GM12878 (cell line): ENCODE measurements at regions of chr14 and their contacts with region 1.

Region 1: DNA sequence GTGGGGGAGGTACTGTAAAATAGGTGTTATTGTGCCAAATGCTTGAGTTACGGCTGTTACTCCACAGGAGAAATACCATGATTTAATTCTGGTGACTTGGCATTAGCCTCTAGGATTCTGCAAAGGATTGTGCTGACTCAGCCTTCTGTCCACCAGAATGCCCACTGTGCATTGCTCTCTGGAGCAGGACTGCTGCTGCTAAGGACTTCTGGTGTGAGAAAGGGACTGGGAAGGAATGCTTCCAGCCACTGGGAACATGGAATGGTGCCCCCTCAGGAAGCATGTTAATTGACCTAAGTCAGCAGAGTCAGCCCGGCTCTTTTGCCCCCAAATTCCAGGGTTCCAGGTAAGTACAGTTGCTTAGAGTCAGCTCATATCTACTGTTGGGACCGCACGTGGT is 32.9 kb downstream of the ZFHX2 start:
- DNase-seq: no peak
- ATAC-seq: no peak
- H3K4me3 ChIP-seq: no peak overlapping the region
- H3K27ac ChIP-seq: no peak overlapping the region
- H3K4me1 ChIP-seq: no peaks in the 10 kb centered on the region
- H3K27me3 ChIP-seq: no peaks in the 10 kb centered on the region
- CTCF ChIP-seq: no peak
- EP300 ChIP-seq: no peak
- POLR2A ChIP-seq: no peak
- RAD21 ChIP-seq: no peak

Region 2: GRCh38 chr14:22766456-22767322 is 752.0 kb before region 1 on chr14 and contains the start of gene OXA1L:
- CTCF ChIA-PET with region 1: no interaction called
- POLR2A ChIA-PET with region 1: no interaction called
- RAD21 ChIA-PET with region 1: no interaction called
- SMC1A ChIA-PET with region 1: no interaction called
- in situ Hi-C with region 1: no loop called
- intact Hi-C with region 1: no loop called
- DNase-seq: peak; percentile 92
- ATAC-seq: peak; percentile 89
- H3K4me3 ChIP-seq: peak within 1 kb of the TSS; percentile 91
- H3K27ac ChIP-seq: peak within 1 kb of the TSS; percentile 98
- H3K4me1 ChIP-seq: no peaks in the 10 kb centered on the region; the same call in 1 of the 2 replicates
- H3K27me3 ChIP-seq: no peaks in the 10 kb centered on the region
- CTCF ChIP-seq: no peak
- EP300 ChIP-seq: no peak
- POLR2A ChIP-seq: peak; percentile 92
- RAD21 ChIP-seq: no peak
- polyA plus RNA-seq, gene OXA1L: 110 to 116 TPM

Region 3: GRCh38 chr14:23454445-23454856 is 64.3 kb before region 1 on chr14:
- CTCF ChIA-PET with region 1: no interaction called
- POLR2A ChIA-PET with region 1: no interaction called
- RAD21 ChIA-PET with region 1: no interaction called
- SMC1A ChIA-PET with region 1: no interaction called
- in situ Hi-C with region 1: no loop called
- intact Hi-C with region 1: no loop called
- DNase-seq: no peak
- ATAC-seq: no peak
- H3K4me3 ChIP-seq: no peak overlapping the region
- H3K27ac ChIP-seq: no peak overlapping the region
- H3K4me1 ChIP-seq: no peaks in the 10 kb centered on the region; the same call in 1 of the 2 replicates
- H3K27me3 ChIP-seq: no peaks in the 10 kb centered on the region; a peak in 1 of 4 replicates
- CTCF ChIP-seq: no peak
- EP300 ChIP-seq: no peak
- POLR2A ChIP-seq: no peak
- RAD21 ChIP-seq: no peak

Region 4: GRCh38 chr14:23548351-23549318 is 29.9 kb after region 1 on chr14:
- CTCF ChIA-PET with region 1: no interaction called
- POLR2A ChIA-PET with region 1: interaction called, 10 read pairs
- RAD21 ChIA-PET with region 1: no interaction called
- SMC1A ChIA-PET with region 1: no interaction called
- in situ Hi-C with region 1: no loop called
- intact Hi-C with region 1: no loop called
- DNase-seq: no peak
- ATAC-seq: no peak
- H3K4me3 ChIP-seq: no peak overlapping the region
- H3K27ac ChIP-seq: no peak overlapping the region
- H3K4me1 ChIP-seq: no peaks in the 10 kb centered on the region
- H3K27me3 ChIP-seq: no peaks in the 10 kb centered on the region
- CTCF ChIP-seq: no peak
- EP300 ChIP-seq: no peak
- POLR2A ChIP-seq: no peak
- RAD21 ChIP-seq: no peak

Region 5: GRCh38 chr14:23704890-23705289 is 186.2 kb after region 1 on chr14:
- CTCF ChIA-PET with region 1: no interaction called
- POLR2A ChIA-PET with region 1: no interaction called
- RAD21 ChIA-PET with region 1: no interaction called
- SMC1A ChIA-PET with region 1: no interaction called
- in situ Hi-C with region 1: no loop called
- intact Hi-C with region 1: no loop called
- DNase-seq: no peak
- ATAC-seq: no peak
- H3K4me3 ChIP-seq: no peak overlapping the region
- H3K27ac ChIP-seq: no peak overlapping the region
- H3K4me1 ChIP-seq: no peaks in the 10 kb centered on the region
- H3K27me3 ChIP-seq: no peaks in the 10 kb centered on the region
- CTCF ChIP-seq: no peak
- EP300 ChIP-seq: no peak
- POLR2A ChIP-seq: no peak
- RAD21 ChIP-seq: no peak